ENCODE measurements at regions of chr9 and their contacts with region 1.

Region 1: GRCh38 chr9:69044240-69045219 is 9.0 kb downstream of the FXN start:
- DNase-seq: peak in 1 of 2 donors; percentile 71
- H3K4me3 ChIP-seq: no peak overlapping the region
- CTCF ChIP-seq: no peak
- POLR2A ChIP-seq: no peak

Region 2: GRCh38 chr9:69199769-69200470 is 155.4 kb after region 1 on chr9:
- intact Hi-C with region 1: loop called (anchors 5 kb)
- DNase-seq: peak in 1 of 2 donors; percentile 72
- H3K4me3 ChIP-seq: no peak overlapping the region
- CTCF ChIP-seq: no peak
- POLR2A ChIP-seq: no peak

Region 3: GRCh38 chr9:69678882-69679538 is 634.5 kb after region 1 on chr9:
- intact Hi-C with region 1: no loop called
- DNase-seq: no peak
- H3K4me3 ChIP-seq: no peak overlapping the region
- CTCF ChIP-seq: no peak
- POLR2A ChIP-seq: no peak